CD8-positive, alpha-beta T cell (primary cell): ENCODE measurements at regions of chr6 and their contacts with region 1.

Region 1: DNA sequence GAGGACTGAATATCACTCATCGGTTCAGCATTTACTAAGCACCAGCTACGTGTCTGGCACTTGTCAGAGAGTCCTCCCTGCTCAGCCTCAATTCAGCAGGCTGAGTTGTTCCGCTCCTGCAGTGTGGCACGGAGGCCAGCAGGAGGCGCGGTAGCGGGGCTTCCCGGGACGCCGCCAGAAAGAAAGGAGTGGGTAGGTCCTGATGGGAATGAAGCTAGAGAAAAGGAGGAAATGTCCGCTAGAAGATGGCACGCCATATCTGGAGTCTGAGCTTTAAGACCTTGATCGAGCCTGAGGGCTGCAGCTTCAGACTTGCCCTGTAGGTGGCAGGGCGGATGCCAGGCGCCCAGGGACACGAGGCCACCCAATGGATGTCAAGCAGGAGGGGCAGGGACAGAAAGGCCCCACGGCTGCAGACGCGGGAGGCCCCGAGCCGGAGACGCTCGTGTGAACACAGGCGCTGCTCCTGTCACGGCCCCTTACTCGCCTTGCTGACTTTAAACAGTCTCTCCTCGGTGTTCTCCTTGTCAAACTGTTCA is 18.7 kb downstream of the SERPINB6 start:
- DNase-seq: peak in 8 of 9 experiments; percentile 44 to 81 (median 64)
- ATAC-seq: peak; percentile 94
- H3K4me3 ChIP-seq: peak overlapping the region in 1 of 2 experiments; percentile 18
- H3K4me3 Mint-ChIP-seq: peak overlapping the region; percentile 62
- H3K27ac ChIP-seq: no peak overlapping the region
- H3K27ac Mint-ChIP-seq: peak overlapping the region; percentile 67
- H3K4me1 ChIP-seq: peaks cover 13% of the 10 kb centered on the region
- H3K4me1 Mint-ChIP-seq: peaks cover 21% of the 10 kb centered on the region
- H3K27me3 ChIP-seq: no peaks in the 10 kb centered on the region
- H3K27me3 Mint-ChIP-seq: no peaks in the 10 kb centered on the region
- CTCF ChIP-seq: peak; percentile 85

Region 2: GRCh38 chr6:2940010-2940850 is 12.4 kb before region 1 on chr6:
- CTCF ChIA-PET with region 1: interaction called, 119 read pairs
- POLR2A ChIA-PET with region 1: interaction called, 19 read pairs
- intact Hi-C with region 1: loop called in 1 of 2 experiments (anchors 1 kb)
- DNase-seq: peak; percentile 52 to 91 (median 73)
- ATAC-seq: peak; percentile 70
- H3K4me3 ChIP-seq: peak overlapping the region; percentile 52 to 75
- H3K4me3 Mint-ChIP-seq: peak overlapping the region; percentile 84
- H3K27ac ChIP-seq: peak overlapping the region; percentile 73 to 84
- H3K27ac Mint-ChIP-seq: peak overlapping the region; percentile 94
- H3K4me1 ChIP-seq: peaks cover 87% of the 10 kb centered on the region
- H3K4me1 Mint-ChIP-seq: peaks cover 80% of the 10 kb centered on the region
- H3K27me3 ChIP-seq: no peaks in the 10 kb centered on the region
- H3K27me3 Mint-ChIP-seq: no peaks in the 10 kb centered on the region
- CTCF ChIP-seq: no peak

Region 3: GRCh38 chr6:2971420-2972218 is 19.0 kb after region 1 on chr6 and contains the start of gene SERPINB6:
- CTCF ChIA-PET with region 1: interaction called, 13 read pairs
- POLR2A ChIA-PET with region 1: interaction called, 3 read pairs
- intact Hi-C with region 1: loop called in 1 of 2 experiments (anchors 2 kb)
- DNase-seq: peak in 8 of 9 experiments; percentile 24 to 69 (median 42)
- ATAC-seq: peak; percentile 54
- H3K4me3 ChIP-seq: peak within 1 kb of the TSS; percentile 61 to 77
- H3K4me3 Mint-ChIP-seq: peak within 1 kb of the TSS; percentile 90
- H3K27ac ChIP-seq: peak within 1 kb of the TSS; percentile 64
- H3K27ac Mint-ChIP-seq: peak within 1 kb of the TSS; percentile 92
- H3K4me1 ChIP-seq: peaks cover 21% of the 10 kb centered on the region
- H3K4me1 Mint-ChIP-seq: peaks cover 53% of the 10 kb centered on the region
- H3K27me3 ChIP-seq: no peaks in the 10 kb centered on the region
- H3K27me3 Mint-ChIP-seq: no peaks in the 10 kb centered on the region
- CTCF ChIP-seq: no peak
- total RNA-seq, gene SERPINB6: 41.7 to 45.6 TPM